ENCODE measurements at regions of chr18 and their contacts with region 1.

Region 1: DNA sequence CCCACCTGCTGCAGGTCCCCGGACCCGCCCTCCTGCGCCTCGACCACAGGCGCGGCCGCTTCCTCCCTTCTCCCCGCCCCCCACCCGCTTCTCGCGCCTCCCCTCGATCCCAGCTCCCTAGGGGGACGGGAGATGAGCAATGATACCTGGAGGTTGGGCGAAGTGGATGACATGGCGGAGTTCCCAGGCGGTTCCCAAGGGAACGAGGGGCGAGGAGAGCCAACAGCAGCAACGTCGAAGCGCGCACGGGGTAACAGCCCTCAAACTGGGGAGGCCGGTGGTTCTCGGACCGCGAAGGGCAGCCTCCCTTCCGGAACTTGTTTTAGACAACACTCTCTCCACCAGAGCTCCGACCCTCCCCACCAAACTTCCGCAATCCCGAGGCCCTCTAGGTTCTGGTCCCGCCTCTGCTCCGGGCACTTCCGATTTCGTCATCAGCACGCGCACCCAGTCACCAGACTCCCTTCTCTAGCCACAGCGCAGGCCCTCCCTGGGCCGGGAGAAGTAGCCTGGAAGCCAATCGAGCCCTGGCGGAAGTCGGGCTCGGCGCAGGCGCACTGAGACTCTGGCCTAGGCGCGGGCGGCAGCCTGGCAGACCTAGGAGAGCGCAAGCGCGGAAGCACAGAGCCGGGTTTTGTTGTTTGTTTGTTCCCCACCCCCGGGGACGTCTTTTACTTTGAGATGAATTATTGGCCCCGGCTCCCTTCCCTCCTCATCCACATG is at the start of gene VPS4B:
- DNase-seq: peak; percentile 99
- ATAC-seq: peak; percentile 97
- H3K4me3 Mint-ChIP-seq: peak within 1 kb of the TSS; percentile 88
- H3K27ac Mint-ChIP-seq: peak within 1 kb of the TSS; percentile 94
- H3K4me1 Mint-ChIP-seq: peaks cover 16% of the 10 kb centered on the region
- H3K27me3 Mint-ChIP-seq: no peaks in the 10 kb centered on the region
- total RNA-seq, gene VPS4B: 72.8 to 78.2 TPM

Region 2: GRCh38 chr18:63131106-63131958 is 290.9 kb before region 1 on chr18:
- POLR2A ChIA-PET with region 1: no interaction called
- DNase-seq: no peak
- ATAC-seq: peak; percentile 55
- H3K4me3 Mint-ChIP-seq: no peak overlapping the region
- H3K27ac Mint-ChIP-seq: peak overlapping the region; percentile 69
- H3K4me1 Mint-ChIP-seq: peaks cover 37% of the 10 kb centered on the region
- H3K27me3 Mint-ChIP-seq: no peaks in the 10 kb centered on the region

Region 3: DNA sequence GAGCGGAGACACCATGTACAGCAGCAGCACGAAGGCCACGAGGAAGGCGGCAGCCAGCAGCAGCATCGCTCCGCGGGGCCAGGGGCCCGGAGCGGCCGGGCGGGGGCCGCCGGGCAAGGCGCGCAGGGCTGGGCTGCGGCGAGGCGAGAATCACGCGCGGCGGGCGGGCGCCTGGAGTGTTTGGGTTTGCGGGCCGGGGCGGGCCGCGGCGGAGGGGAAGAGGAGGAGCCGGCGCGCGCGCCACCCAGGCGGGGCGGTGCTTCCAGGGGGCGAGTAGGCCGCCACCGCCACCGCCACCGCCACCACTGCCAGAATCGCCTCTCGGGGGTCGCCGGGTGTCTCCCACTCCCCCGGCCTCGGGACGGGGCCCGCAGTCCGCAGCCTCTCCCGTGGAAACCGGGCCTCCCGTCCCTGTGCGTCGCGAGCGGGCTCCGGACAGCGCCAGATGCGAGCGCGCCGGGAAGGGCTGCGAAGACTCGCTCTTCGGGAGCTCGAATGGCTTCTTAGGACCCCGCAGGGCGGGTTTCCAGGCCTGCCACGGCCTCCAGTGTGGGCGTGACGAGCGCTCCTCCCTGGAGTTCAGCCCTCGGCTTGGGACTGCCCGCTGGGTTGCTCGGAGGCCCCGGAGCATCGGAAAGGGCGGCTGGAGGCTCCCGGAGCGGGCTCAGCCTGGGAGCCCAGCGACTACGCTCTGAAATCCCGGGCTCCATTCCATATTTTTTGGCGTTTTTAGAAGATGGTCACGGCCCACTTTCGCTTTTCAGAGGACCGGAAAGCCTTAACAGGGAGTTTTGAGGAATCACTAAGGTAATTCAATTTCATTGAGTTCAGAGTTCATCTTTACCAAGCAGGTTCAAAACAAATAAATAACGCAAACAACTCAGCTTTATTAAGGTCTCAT is 54.9 kb before region 1 on chr18 and contains the start of gene KDSR:
- POLR2A ChIA-PET with region 1: interaction called, 22 read pairs
- DNase-seq: peak; percentile 92
- ATAC-seq: peak; percentile 82
- H3K4me3 Mint-ChIP-seq: peak within 1 kb of the TSS; percentile 95
- H3K27ac Mint-ChIP-seq: peak within 1 kb of the TSS; percentile 87
- H3K4me1 Mint-ChIP-seq: peaks cover 25% of the 10 kb centered on the region
- H3K27me3 Mint-ChIP-seq: no peaks in the 10 kb centered on the region
- total RNA-seq, gene KDSR: 48.1 to 50.1 TPM

Region 4: GRCh38 chr18:63410792-63411191 is 11.5 kb before region 1 on chr18:
- POLR2A ChIA-PET with region 1: interaction called, 12 read pairs
- DNase-seq: no peak
- ATAC-seq: peak; percentile 28
- H3K4me3 Mint-ChIP-seq: no peak overlapping the region
- H3K27ac Mint-ChIP-seq: no peak overlapping the region
- H3K4me1 Mint-ChIP-seq: peaks cover 39% of the 10 kb centered on the region
- H3K27me3 Mint-ChIP-seq: no peaks in the 10 kb centered on the region

Measured in activated naive CD8-positive, alpha-beta T cell treated with anti-CD3 and anti-CD28 coated beads, Interleukin-2, amount 10 ng/mL, durations not matched to agents 7 days and 5 days (primary cell).